Common myeloid progenitor, CD34-positive (primary cell): ENCODE measurements at regions of chr1 and their contacts with region 1.

Region 1: GRCh38 chr1:212630158-212630900 is 21.8 kb downstream of the ATF3 start:
- DNase-seq: peak; percentile 93 to 98 (median 97)
- H3K4me3 ChIP-seq: no peak overlapping the region
- H3K27ac ChIP-seq: no peak overlapping the region
- H3K4me1 ChIP-seq: peaks cover 15 to 40% (median 30%) of the 10 kb centered on the region in 4 experiments
- H3K27me3 ChIP-seq: no peaks in the 10 kb centered on the region

Region 2: GRCh38 chr1:212600980-212601379 is 29.3 kb before region 1 on chr1:
- CTCF ChIA-PET with region 1: no interaction called
- POLR2A ChIA-PET with region 1: no interaction called
- DNase-seq: no peak
- H3K4me3 ChIP-seq: no peak overlapping the region
- H3K27ac ChIP-seq: no peak overlapping the region
- H3K4me1 ChIP-seq: peaks cover 2 to 11% (median 8%) of the 10 kb centered on the region in 4 experiments
- H3K27me3 ChIP-seq: peaks cover 16 to 41% (median 21%) of the 10 kb centered on the region in 5 experiments

Region 3: GRCh38 chr1:212613455-212614390 is 16.6 kb before region 1 on chr1:
- CTCF ChIA-PET with region 1: interaction called, 24 read pairs
- POLR2A ChIA-PET with region 1: interaction called, 7 read pairs
- DNase-seq: no peak
- H3K4me3 ChIP-seq: no peak overlapping the region
- H3K27ac ChIP-seq: no peak overlapping the region
- H3K4me1 ChIP-seq: peaks cover 0 to 27% (median 18%) of the 10 kb centered on the region in 4 experiments
- H3K27me3 ChIP-seq: peaks cover 0 to 14% (median 2%) of the 10 kb centered on the region in 5 experiments

Region 4: GRCh38 chr1:212618501-212619405 is 11.6 kb before region 1 on chr1:
- CTCF ChIA-PET with region 1: interaction called, 24 read pairs
- POLR2A ChIA-PET with region 1: interaction called, 6 read pairs
- DNase-seq: no peak
- H3K4me3 ChIP-seq: no peak overlapping the region
- H3K27ac ChIP-seq: no peak overlapping the region
- H3K4me1 ChIP-seq: peaks cover 0 to 27% (median 19%) of the 10 kb centered on the region in 4 experiments
- H3K27me3 ChIP-seq: no peaks in the 10 kb centered on the region